ENCODE measurements at regions of chr5 and their contacts with region 1.

Region 1: GRCh38 chr5:83430130-83431010 is 41.2 kb upstream of the VCAN start:
- DNase-seq: peak in 8 of 9 donors; percentile 8 to 52 (median 38)
- ATAC-seq: peak; percentile 79
- H3K4me3 ChIP-seq: no peak overlapping the region
- H3K4me3 Mint-ChIP-seq: no peak overlapping the region
- H3K27ac ChIP-seq: no peak overlapping the region
- H3K27ac Mint-ChIP-seq: no peak overlapping the region
- H3K4me1 ChIP-seq: no peaks in the 10 kb centered on the region
- H3K4me1 Mint-ChIP-seq: peaks cover 0 to 2% (median 0%) of the 10 kb centered on the region in 7 donors
- H3K27me3 ChIP-seq: no peaks in the 10 kb centered on the region
- H3K27me3 Mint-ChIP-seq: peaks cover 0 to 4% (median 0%) of the 10 kb centered on the region in 5 donors

Region 2: DNA sequence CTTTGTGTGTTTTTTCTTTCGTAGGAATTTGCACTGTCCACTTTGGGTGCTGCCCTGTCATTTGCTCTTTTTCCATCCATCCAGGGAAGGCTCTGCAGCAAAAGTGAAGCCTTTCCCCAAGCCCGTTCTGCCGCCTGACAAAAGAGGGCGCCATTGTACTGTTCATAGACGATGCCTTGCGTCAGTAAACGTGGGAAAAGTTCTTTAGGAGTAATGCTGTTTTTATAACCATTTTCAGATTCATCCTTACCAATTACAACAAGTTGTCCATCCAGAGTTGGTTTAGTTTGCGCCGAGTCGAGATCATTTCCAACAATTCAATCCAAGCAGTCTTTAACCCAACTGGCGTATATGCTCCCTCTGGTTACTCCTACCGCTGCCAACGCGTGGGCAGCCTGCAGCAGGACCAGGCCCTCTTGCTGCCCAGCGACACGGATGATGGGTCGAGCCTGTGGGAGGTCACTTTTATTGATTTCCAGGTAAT is 1118.0 kb before region 1 on chr5:
- CTCF ChIA-PET with region 1: no interaction called
- POLR2A ChIA-PET with region 1: no interaction called
- intact Hi-C with region 1: loop called (anchors 1 kb)
- DNase-seq: peak in 4 of 9 donors; percentile 5 to 52 (median 6)
- ATAC-seq: no peak
- H3K4me3 ChIP-seq: no peak overlapping the region
- H3K4me3 Mint-ChIP-seq: no peak overlapping the region
- H3K27ac ChIP-seq: no peak overlapping the region
- H3K27ac Mint-ChIP-seq: no peak overlapping the region
- H3K4me1 ChIP-seq: no peaks in the 10 kb centered on the region
- H3K4me1 Mint-ChIP-seq: peaks cover 0 to 7% (median 0%) of the 10 kb centered on the region in 7 donors
- H3K27me3 ChIP-seq: no peaks in the 10 kb centered on the region
- H3K27me3 Mint-ChIP-seq: peaks cover 0 to 4% (median 0%) of the 10 kb centered on the region in 5 donors

Region 3: GRCh38 chr5:83473346-83474163 is 43.2 kb after region 1 on chr5:
- CTCF ChIA-PET with region 1: no interaction called
- POLR2A ChIA-PET with region 1: no interaction called
- intact Hi-C with region 1: loop called in 1 of 2 experiments (anchors 2 kb)
- DNase-seq: peak in 8 of 9 donors; percentile 16 to 60 (median 26)
- ATAC-seq: peak; percentile 66
- H3K4me3 ChIP-seq: peak overlapping the region; percentile 24
- H3K4me3 Mint-ChIP-seq: peak overlapping the region; percentile 78 to 90 (median 84)
- H3K27ac ChIP-seq: no peak overlapping the region
- H3K27ac Mint-ChIP-seq: peak overlapping the region in 1 of 9 donors; percentile 38
- H3K4me1 ChIP-seq: peaks cover 4 to 23% of the 10 kb centered on the region in 2 donors
- H3K4me1 Mint-ChIP-seq: peaks cover 17 to 42% (median 38%) of the 10 kb centered on the region in 7 donors
- H3K27me3 ChIP-seq: peaks cover 0 to 15% of the 10 kb centered on the region in 2 donors
- H3K27me3 Mint-ChIP-seq: peaks cover 73 to 86% (median 80%) of the 10 kb centered on the region in 5 donors

Region 4: GRCh38 chr5:83487155-83487554 is 56.8 kb after region 1 on chr5:
- CTCF ChIA-PET with region 1: no interaction called
- POLR2A ChIA-PET with region 1: no interaction called
- intact Hi-C with region 1: no loop called
- DNase-seq: no peak
- ATAC-seq: no peak
- H3K4me3 ChIP-seq: no peak overlapping the region
- H3K4me3 Mint-ChIP-seq: no peak overlapping the region
- H3K27ac ChIP-seq: no peak overlapping the region
- H3K27ac Mint-ChIP-seq: no peak overlapping the region
- H3K4me1 ChIP-seq: no peaks in the 10 kb centered on the region
- H3K4me1 Mint-ChIP-seq: peaks cover 0 to 2% (median 0%) of the 10 kb centered on the region in 7 donors
- H3K27me3 ChIP-seq: no peaks in the 10 kb centered on the region
- H3K27me3 Mint-ChIP-seq: peaks cover 9 to 49% (median 24%) of the 10 kb centered on the region in 5 donors

Region 5: DNA sequence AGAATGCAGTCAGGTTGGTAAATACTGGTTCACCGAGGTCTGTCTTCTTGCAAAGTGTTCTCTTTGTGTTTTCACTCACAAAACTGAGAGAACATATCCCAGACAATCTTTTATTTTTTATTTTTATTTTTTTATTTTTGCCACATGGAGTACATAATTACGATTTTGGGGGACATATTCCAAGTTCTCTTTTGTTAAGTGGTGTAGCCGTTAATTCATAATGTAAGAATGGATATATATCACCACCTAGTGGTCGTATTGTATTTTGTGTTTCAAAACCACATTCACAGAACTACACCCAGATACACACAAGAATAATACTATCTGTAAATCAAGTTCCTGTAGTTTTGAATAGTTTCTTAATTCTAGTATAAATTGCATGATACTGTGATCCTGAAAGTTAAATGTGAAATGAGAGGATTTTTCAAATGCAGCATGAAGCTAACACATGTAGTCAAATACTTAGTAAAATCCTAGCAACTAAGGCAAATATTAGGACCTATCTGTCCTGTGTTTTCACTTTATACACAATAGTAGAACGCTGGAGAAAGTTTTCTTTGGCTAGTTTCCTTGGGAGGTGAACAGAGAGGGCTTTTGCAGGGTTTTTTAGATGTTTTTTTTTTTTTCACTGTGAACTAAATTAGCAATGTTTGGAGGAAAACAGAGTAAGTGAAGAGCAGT is 133.8 kb after region 1 on chr5:
- CTCF ChIA-PET with region 1: no interaction called
- POLR2A ChIA-PET with region 1: no interaction called
- intact Hi-C with region 1: loop called in 1 of 2 experiments (anchors 2 kb)
- DNase-seq: peak in 5 of 9 donors; percentile 27 to 40 (median 31)
- ATAC-seq: peak; percentile 42
- H3K4me3 ChIP-seq: no peak overlapping the region
- H3K4me3 Mint-ChIP-seq: no peak overlapping the region
- H3K27ac ChIP-seq: no peak overlapping the region
- H3K27ac Mint-ChIP-seq: no peak overlapping the region
- H3K4me1 ChIP-seq: no peaks in the 10 kb centered on the region
- H3K4me1 Mint-ChIP-seq: no peaks in the 10 kb centered on the region
- H3K27me3 ChIP-seq: peaks cover 0 to 4% of the 10 kb centered on the region in 2 donors
- H3K27me3 Mint-ChIP-seq: peaks cover 18 to 34% (median 27%) of the 10 kb centered on the region in 5 donors

Measured in naive thymus-derived CD4-positive, alpha-beta T cell (primary cell).